ENCODE measurements at regions of chr7 and their contacts with region 1.

Region 1: GRCh38 chr7:44259547-44260457 is 59.0 kb downstream of the YKT6 start:
- DNase-seq: peak; percentile 71
- H3K4me3 ChIP-seq: no peak overlapping the region
- H3K27ac ChIP-seq: no peak overlapping the region
- H3K4me1 ChIP-seq: peaks cover 52% of the 10 kb centered on the region
- H3K27me3 ChIP-seq: no peaks in the 10 kb centered on the region
- CTCF ChIP-seq: no peak

Region 2: GRCh38 chr7:44307301-44307900 is 47.6 kb after region 1 on chr7:
- CTCF ChIA-PET with region 1: no interaction called
- dilution Hi-C with region 1: no loop called
- in situ Hi-C with region 1: no loop called
- intact Hi-C with region 1: loop called (anchors 5 kb)
- DNase-seq: peak; percentile 33
- H3K4me3 ChIP-seq: no peak overlapping the region
- H3K27ac ChIP-seq: peak overlapping the region; percentile 58
- H3K4me1 ChIP-seq: peaks cover 18% of the 10 kb centered on the region
- H3K27me3 ChIP-seq: no peaks in the 10 kb centered on the region
- CTCF ChIP-seq: peak; percentile 27 to 44

Region 3: GRCh38 chr7:44460325-44460724 is 200.5 kb after region 1 on chr7:
- CTCF ChIA-PET with region 1: interaction called, 10 read pairs
- dilution Hi-C with region 1: no loop called
- in situ Hi-C with region 1: no loop called
- intact Hi-C with region 1: no loop called
- DNase-seq: peak; percentile 30
- H3K4me3 ChIP-seq: no peak overlapping the region
- H3K27ac ChIP-seq: no peak overlapping the region
- H3K4me1 ChIP-seq: peaks cover 20% of the 10 kb centered on the region
- H3K27me3 ChIP-seq: no peaks in the 10 kb centered on the region
- CTCF ChIP-seq: no peak